A549 (cell line): ENCODE measurements at regions of chr11 and their contacts with region 1.

Region 1: DNA sequence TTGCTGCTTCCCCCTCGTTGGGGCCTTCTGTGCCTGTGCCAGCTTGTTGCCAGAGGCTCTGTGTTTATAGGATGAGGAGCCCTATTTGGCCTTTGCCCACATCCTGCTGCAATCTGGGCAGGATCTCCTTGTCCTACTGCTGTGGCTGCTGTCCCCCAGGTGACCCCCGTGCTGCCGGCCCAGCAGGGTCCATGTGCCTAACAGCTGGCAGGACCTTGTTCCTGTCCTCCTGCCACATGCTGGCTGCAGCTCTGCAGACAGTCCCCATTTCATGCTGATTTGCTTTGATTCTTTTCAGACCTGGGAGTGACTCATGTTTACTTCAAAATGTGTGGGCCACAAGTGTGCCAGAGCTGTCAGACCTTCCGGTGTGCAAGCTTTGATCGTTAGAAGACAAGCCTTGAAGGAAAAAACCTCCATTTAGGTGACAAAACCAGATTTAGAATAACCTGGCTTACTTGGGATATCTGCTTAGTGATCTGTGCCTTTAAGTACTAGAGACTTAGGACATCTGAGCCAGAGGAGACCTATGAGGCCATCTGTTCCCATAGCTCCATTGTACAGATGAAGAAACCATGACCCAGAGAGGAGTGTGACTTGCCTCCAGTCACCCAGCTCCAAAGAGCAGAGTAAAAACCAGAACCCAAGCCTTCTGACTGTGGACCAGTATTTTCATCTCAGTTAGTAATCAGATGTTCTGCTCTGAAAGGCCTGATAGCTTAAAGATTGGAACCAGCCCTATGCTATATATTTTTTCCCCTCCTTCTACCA is 11.1 kb downstream of the NAV2 start:
- DNase-seq: no peak
- ATAC-seq: no peak; a peak in 1 of 6 replicates
- H3K4me3 ChIP-seq: no peak overlapping the region
- H3K27ac ChIP-seq: peak overlapping the region; percentile 25 to 59; a peak in 3 of 6 replicates
- H3K4me1 ChIP-seq: peaks cover 18% of the 10 kb centered on the region
- CTCF ChIP-seq: no peak
- EP300 ChIP-seq: no peak
- POLR2A ChIP-seq: no peak
- RAD21 ChIP-seq: no peak

Region 2: GRCh38 chr11:19633276-19633675 is 90.5 kb before region 1 on chr11:
- CTCF ChIA-PET with region 1: no interaction called
- POLR2A ChIA-PET with region 1: no interaction called
- DNase-seq: no peak
- ATAC-seq: 0 out of 6 replicates have a peak, but pooled peaks of 1 of the 2 experiments have one; percentile 8
- H3K4me3 ChIP-seq: no peak overlapping the region
- H3K27ac ChIP-seq: no peak overlapping the region
- H3K4me1 ChIP-seq: no peaks in the 10 kb centered on the region
- CTCF ChIP-seq: no peak
- EP300 ChIP-seq: no peak
- POLR2A ChIP-seq: no peak
- RAD21 ChIP-seq: no peak

Region 3: GRCh38 chr11:19712281-19713220 is 11.2 kb before region 1 on chr11 and contains the start of gene NAV2:
- CTCF ChIA-PET with region 1: interaction called, 4 read pairs
- POLR2A ChIA-PET with region 1: interaction called, 10 read pairs
- DNase-seq: peak; percentile 78 to 91
- ATAC-seq: peak; percentile 91 to 97
- H3K4me3 ChIP-seq: peak within 1 kb of the TSS; percentile 49
- H3K27ac ChIP-seq: peak within 1 kb of the TSS; percentile 82 to 87
- H3K4me1 ChIP-seq: peaks cover 36% of the 10 kb centered on the region
- CTCF ChIP-seq: no peak
- EP300 ChIP-seq: no peak; a peak in 1 of 5 replicates
- POLR2A ChIP-seq: peak; percentile 91
- RAD21 ChIP-seq: 0 out of 5 replicates have a peak, but pooled peaks of 1 of the 2 experiments have one; percentile 33
- polyA plus RNA-seq, gene NAV2: 19.8 and 27.6 TPM in 2 replicates

Region 4: GRCh38 chr11:19735157-19735908 is 11.6 kb after region 1 on chr11:
- CTCF ChIA-PET with region 1: interaction called, 10 read pairs
- POLR2A ChIA-PET with region 1: no interaction called
- DNase-seq: no peak
- ATAC-seq: no peak
- H3K4me3 ChIP-seq: no peak overlapping the region
- H3K27ac ChIP-seq: no peak overlapping the region
- H3K4me1 ChIP-seq: 0 out of 3 replicates have a peak, but pooled peaks cover 3% of the 10 kb centered on the region
- CTCF ChIP-seq: no peak
- EP300 ChIP-seq: no peak
- POLR2A ChIP-seq: no peak
- RAD21 ChIP-seq: 0 out of 5 replicates have a peak, but pooled peaks of 1 of the 2 experiments have one; percentile 5

Region 5: DNA sequence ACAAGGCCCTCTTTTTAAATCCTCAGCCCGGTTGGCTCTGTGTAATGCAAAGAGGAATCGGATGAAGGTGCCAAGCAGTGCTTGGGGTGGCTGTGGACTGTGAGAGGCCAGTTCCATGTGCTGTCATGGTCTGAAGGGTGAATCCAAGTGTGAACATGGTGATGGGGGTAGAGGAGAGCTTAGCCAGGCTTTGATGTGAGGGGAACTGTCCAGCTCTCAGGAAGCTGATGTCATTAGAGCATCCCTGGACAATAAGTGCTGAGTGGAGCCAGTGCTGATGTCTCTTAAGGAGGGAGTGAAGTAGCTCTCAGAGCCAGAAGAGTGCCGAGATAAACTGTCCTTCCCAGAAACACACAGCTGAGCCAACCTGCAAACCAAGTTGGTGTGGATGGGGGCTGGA is 42.4 kb after region 1 on chr11:
- CTCF ChIA-PET with region 1: no interaction called
- POLR2A ChIA-PET with region 1: no interaction called
- DNase-seq: no peak
- ATAC-seq: peak in 1 of 2 experiments; percentile 21; a peak in 2 of 6 replicates
- H3K4me3 ChIP-seq: no peak overlapping the region
- H3K27ac ChIP-seq: no peak overlapping the region
- H3K4me1 ChIP-seq: no peaks in the 10 kb centered on the region
- CTCF ChIP-seq: no peak
- EP300 ChIP-seq: no peak
- POLR2A ChIP-seq: no peak
- RAD21 ChIP-seq: no peak